GM13977 (cell line): ENCODE measurements at regions of chr2 and their contacts with region 1.

Region 1: DNA sequence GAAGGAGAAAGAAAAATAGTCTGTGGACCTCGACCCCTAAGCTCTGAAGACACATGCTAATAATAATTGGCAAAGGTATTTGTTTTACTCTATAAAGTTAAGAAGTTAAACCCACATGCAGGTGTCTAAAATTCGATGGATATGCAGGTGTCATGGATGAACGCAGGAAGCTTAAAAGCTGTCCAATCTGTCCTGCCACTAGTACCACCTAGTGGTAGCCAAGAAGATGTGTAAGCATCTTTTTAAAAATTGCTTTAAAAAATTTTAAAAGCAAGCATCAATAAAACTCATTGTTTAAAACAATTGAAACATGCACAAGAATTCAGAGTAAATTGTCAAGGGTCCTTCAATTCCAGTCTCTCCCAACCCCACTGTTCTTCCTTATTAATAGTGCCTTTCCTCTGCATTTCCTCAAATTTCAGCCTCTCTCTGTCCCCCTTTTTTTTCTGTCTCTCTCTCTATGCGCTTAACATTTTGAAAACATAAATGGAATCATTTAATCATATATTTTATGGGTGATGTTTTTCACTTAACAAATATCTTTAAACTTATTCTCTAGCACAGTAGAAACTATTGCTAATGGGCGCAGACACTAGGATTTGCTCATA is 30.6 kb upstream of the PPP3R1 start:
- DNase-seq: peak; percentile 74
- CTCF ChIP-seq: peak; percentile 69

Region 2: DNA sequence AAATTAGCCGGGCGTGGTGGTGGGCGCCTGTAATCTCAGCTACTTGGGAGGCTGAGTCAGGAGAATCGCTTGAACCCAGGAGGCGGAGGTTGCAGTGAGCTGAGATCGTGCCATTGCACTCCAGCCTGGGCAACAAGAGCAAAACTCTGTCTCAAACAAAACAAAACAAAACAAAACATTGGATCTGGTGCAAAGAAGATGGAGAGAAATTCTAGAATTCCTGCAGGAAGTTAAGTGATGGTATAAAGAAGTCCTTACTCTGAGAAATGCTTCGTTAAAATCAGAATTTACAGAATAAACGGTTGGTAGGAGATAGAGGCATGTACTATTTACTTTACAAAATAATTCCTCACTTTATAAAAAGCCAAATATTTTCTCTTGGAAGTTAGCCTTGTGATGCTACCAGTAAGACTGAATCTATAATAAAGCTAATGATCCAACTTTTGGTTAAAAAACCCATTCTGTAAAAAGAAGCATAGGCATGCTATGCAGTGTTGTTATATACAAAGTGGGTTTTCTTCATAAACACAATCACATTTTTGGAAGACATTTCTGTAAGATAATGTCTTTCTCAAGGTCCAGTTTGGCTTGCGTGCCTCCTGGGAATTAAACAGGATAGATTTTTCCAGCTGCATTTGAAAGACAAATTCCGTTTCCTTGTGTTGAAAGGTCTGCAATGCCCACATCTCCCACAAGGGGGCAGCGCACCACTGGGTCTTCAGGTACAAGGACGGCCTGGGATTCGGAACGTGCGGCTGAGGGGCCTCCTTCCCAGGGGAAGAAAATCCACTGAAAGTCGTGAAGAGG is 160.8 kb before region 1 on chr2:
- in situ Hi-C with region 1: loop called (anchors 10 kb)
- DNase-seq: peak; percentile 46
- CTCF ChIP-seq: peak; percentile 95